ENCODE measurements at regions of chr3 and their contacts with region 1.

Region 1: GRCh38 chr3:71875461-71875947 is 90.6 kb upstream of the PROK2 start:
- DNase-seq: peak; percentile 61 to 70 (median 64)
- ATAC-seq: peak; percentile 96
- H3K4me3 ChIP-seq: no peak overlapping the region
- H3K27ac ChIP-seq: no peak overlapping the region
- H3K4me1 ChIP-seq: no peaks in the 10 kb centered on the region
- H3K27me3 ChIP-seq: peaks cover 0 to 2% of the 10 kb centered on the region in 2 experiments; a peak in 1 of 5 replicates
- CTCF ChIP-seq: peak; percentile 73 to 88 (median 83)
- EP300 ChIP-seq: peak; percentile 13; the same call in 1 of the 2 replicates
- POLR2A ChIP-seq: no peak
- RAD21 ChIP-seq: peak; percentile 90 to 91

Region 2: DNA sequence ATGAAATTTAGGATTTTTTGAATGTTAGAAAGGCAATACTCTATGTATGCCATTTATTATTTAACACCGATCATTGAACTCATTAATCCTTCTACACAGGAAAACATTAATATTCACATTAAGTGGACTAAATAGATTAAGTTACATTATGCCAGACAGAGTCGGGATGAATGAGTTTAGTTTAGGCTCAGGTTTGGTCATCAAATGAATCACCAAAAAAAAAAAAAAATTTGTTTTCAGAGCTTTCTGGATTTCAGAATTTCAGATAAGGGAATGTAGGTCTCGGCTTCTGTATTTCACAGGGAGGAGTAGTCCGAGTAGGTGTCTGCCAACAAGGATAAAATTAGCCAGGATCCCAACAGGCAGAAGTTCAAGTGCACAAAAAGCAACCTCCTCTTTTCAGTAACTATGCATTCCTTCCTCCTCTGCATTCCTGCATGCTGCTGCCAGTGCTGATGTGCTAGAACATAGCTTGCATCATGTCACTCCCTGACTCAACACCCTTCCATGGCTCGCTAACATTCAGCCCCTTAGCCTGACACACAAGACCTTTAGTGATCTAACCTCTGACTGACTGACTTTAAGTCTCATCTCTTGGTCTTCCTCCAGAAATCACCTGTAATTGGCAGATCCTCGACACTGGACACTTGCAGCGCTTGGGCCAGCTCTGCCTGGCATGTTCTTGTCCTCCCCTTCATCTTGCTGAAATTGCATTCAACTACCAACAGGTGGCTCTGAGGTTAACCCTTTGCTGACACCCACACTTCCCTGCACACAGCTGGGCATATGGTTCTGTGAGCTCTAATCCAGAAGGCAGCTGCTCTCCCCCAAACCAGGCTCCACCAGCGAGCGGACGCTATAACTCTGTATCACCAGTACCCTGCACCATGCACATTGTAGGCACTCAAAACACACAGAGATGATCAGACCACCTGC is 54.8 kb after region 1 on chr3:
- CTCF ChIA-PET with region 1: no interaction called
- POLR2A ChIA-PET with region 1: no interaction called
- in situ Hi-C with region 1: no loop called
- intact Hi-C with region 1: loop called (anchors 5 kb)
- DNase-seq: peak; percentile 13 to 26 (median 20)
- ATAC-seq: peak; percentile 78
- H3K4me3 ChIP-seq: no peak overlapping the region
- H3K27ac ChIP-seq: no peak overlapping the region
- H3K4me1 ChIP-seq: peaks cover 4 to 28% of the 10 kb centered on the region in 2 experiments
- H3K27me3 ChIP-seq: peaks cover 2 to 19% of the 10 kb centered on the region in 2 experiments; a peak in 2 of 5 replicates
- CTCF ChIP-seq: peak; percentile 42 to 49 (median 48); a peak in 5 of 6 replicates
- EP300 ChIP-seq: no peak
- POLR2A ChIP-seq: no peak
- RAD21 ChIP-seq: peak in 1 of 2 experiments; percentile 38; a peak in 2 of 4 replicates

Region 3: GRCh38 chr3:71955240-71956068 is 80.0 kb after region 1 on chr3:
- CTCF ChIA-PET with region 1: no interaction called
- POLR2A ChIA-PET with region 1: no interaction called
- in situ Hi-C with region 1: no loop called
- intact Hi-C with region 1: loop called (anchors 2 kb)
- DNase-seq: peak; percentile 21 to 66 (median 35)
- ATAC-seq: peak; percentile 64
- H3K4me3 ChIP-seq: no peak overlapping the region
- H3K27ac ChIP-seq: no peak overlapping the region
- H3K4me1 ChIP-seq: peaks cover 0 to 5% of the 10 kb centered on the region in 2 experiments; a peak in 2 of 5 replicates
- H3K27me3 ChIP-seq: peaks cover 0 to 6% of the 10 kb centered on the region in 2 experiments; a peak in 2 of 5 replicates
- CTCF ChIP-seq: peak; percentile 60 to 71 (median 63)
- EP300 ChIP-seq: peak; percentile 46
- POLR2A ChIP-seq: no peak
- RAD21 ChIP-seq: peak; percentile 68 to 80

Region 4: GRCh38 chr3:72092778-72093177 is 217.3 kb after region 1 on chr3:
- CTCF ChIA-PET with region 1: no interaction called
- POLR2A ChIA-PET with region 1: no interaction called
- in situ Hi-C with region 1: loop called (anchors 10 kb)
- intact Hi-C with region 1: loop called (anchors 5 kb)
- DNase-seq: peak in 2 of 4 experiments; percentile 43 to 44
- ATAC-seq: peak; percentile 80
- H3K4me3 ChIP-seq: no peak overlapping the region
- H3K27ac ChIP-seq: no peak overlapping the region
- H3K4me1 ChIP-seq: peaks cover 7 to 16% of the 10 kb centered on the region in 2 experiments; a peak in 4 of 5 replicates
- H3K27me3 ChIP-seq: no peaks in the 10 kb centered on the region
- CTCF ChIP-seq: peak in 2 of 3 experiments; percentile 47; a peak in 3 of 6 replicates
- EP300 ChIP-seq: no peak
- POLR2A ChIP-seq: no peak
- RAD21 ChIP-seq: peak; percentile 7 to 51; a peak in 2 of 4 replicates

Region 5: GRCh38 chr3:72818092-72818773 is 942.7 kb after region 1 on chr3:
- CTCF ChIA-PET with region 1: interaction called, 4 read pairs
- POLR2A ChIA-PET with region 1: no interaction called
- in situ Hi-C with region 1: no loop called
- intact Hi-C with region 1: loop called (anchors 10 kb)
- DNase-seq: peak in 1 of 4 experiments; percentile 12
- ATAC-seq: peak; percentile 50; the same call in 1 of the 3 replicates
- H3K4me3 ChIP-seq: no peak overlapping the region
- H3K27ac ChIP-seq: no peak overlapping the region
- H3K4me1 ChIP-seq: peaks cover 0 to 7% of the 10 kb centered on the region in 2 experiments; a peak in 2 of 5 replicates
- H3K27me3 ChIP-seq: no peaks in the 10 kb centered on the region
- CTCF ChIP-seq: peak in 2 of 3 experiments; percentile 60 to 71; a peak in 4 of 6 replicates
- EP300 ChIP-seq: no peak
- POLR2A ChIP-seq: no peak
- RAD21 ChIP-seq: peak; percentile 76 to 84

Measured in K562 (cell line).